Ascending aorta (tissue), 2 donors: ENCODE measurements at regions of chr6 and their contacts with region 1.

Region 1: GRCh38 chr6:71420693-71421328 is 132.2 kb downstream of the OGFRL1 start:
- DNase-seq: peak; percentile 86 to 97
- H3K4me3 ChIP-seq: peak overlapping the region; percentile 85 to 95
- H3K27ac ChIP-seq: peak overlapping the region; percentile 96 to 100
- H3K4me1 ChIP-seq: peaks cover 0 to 3% of the 10 kb centered on the region in 2 donors
- H3K27me3 ChIP-seq: no peaks in the 10 kb centered on the region
- CTCF ChIP-seq: no peak

Region 2: GRCh38 chr6:70991253-70991652 is 429.6 kb before region 1 on chr6:
- intact Hi-C with region 1: no loop called
- DNase-seq: no peak
- H3K4me3 ChIP-seq: no peak overlapping the region
- H3K27ac ChIP-seq: no peak overlapping the region
- H3K4me1 ChIP-seq: no peaks in the 10 kb centered on the region
- H3K27me3 ChIP-seq: no peaks in the 10 kb centered on the region
- CTCF ChIP-seq: no peak

Region 3: GRCh38 chr6:71288228-71289001 is 132.4 kb before region 1 on chr6 and contains the start of gene OGFRL1:
- intact Hi-C with region 1: loop called (anchors 5 kb)
- DNase-seq: peak; percentile 33 to 84
- H3K4me3 ChIP-seq: peak within 1 kb of the TSS; percentile 96 to 99
- H3K27ac ChIP-seq: peak within 1 kb of the TSS; percentile 95 to 98
- H3K4me1 ChIP-seq: peaks cover 0 to 13% of the 10 kb centered on the region in 2 donors
- H3K27me3 ChIP-seq: no peaks in the 10 kb centered on the region
- CTCF ChIP-seq: peak in 1 of 3 experiments; percentile 37
- total RNA-seq, gene OGFRL1: 14.6 TPM

Region 4: GRCh38 chr6:71383901-71384489 is 36.8 kb before region 1 on chr6:
- intact Hi-C with region 1: loop called (anchors 2 kb)
- DNase-seq: no peak
- H3K4me3 ChIP-seq: no peak overlapping the region
- H3K27ac ChIP-seq: no peak overlapping the region
- H3K4me1 ChIP-seq: peaks cover 0 to 4% of the 10 kb centered on the region in 2 donors
- H3K27me3 ChIP-seq: no peaks in the 10 kb centered on the region
- CTCF ChIP-seq: peak; percentile 47 to 78 (median 52)

Region 5: GRCh38 chr6:71404145-71404966 is 16.5 kb before region 1 on chr6:
- intact Hi-C with region 1: loop called (anchors 2 kb)
- DNase-seq: no peak
- H3K4me3 ChIP-seq: peak overlapping the region in 1 of 2 donors; percentile 2
- H3K27ac ChIP-seq: peak overlapping the region; percentile 57 to 58
- H3K4me1 ChIP-seq: peaks cover 0 to 32% of the 10 kb centered on the region in 2 donors
- H3K27me3 ChIP-seq: no peaks in the 10 kb centered on the region
- CTCF ChIP-seq: no peak

Region 6: GRCh38 chr6:71457929-71458328 is 37.1 kb after region 1 on chr6:
- intact Hi-C with region 1: no loop called
- DNase-seq: no peak
- H3K4me3 ChIP-seq: no peak overlapping the region
- H3K27ac ChIP-seq: no peak overlapping the region
- H3K4me1 ChIP-seq: no peaks in the 10 kb centered on the region
- H3K27me3 ChIP-seq: no peaks in the 10 kb centered on the region
- CTCF ChIP-seq: no peak

Region 7: GRCh38 chr6:71468841-71469750 is 48.3 kb after region 1 on chr6:
- intact Hi-C with region 1: loop called (anchors 1 kb)
- DNase-seq: peak in 1 of 2 donors; percentile 80
- H3K4me3 ChIP-seq: peak overlapping the region; percentile 7 to 46
- H3K27ac ChIP-seq: peak overlapping the region; percentile 74
- H3K4me1 ChIP-seq: peaks cover 0 to 10% of the 10 kb centered on the region in 2 donors
- H3K27me3 ChIP-seq: no peaks in the 10 kb centered on the region
- CTCF ChIP-seq: no peak

Region 8: GRCh38 chr6:71489747-71490315 is 69.0 kb after region 1 on chr6:
- intact Hi-C with region 1: loop called (anchors 5 kb)
- DNase-seq: peak in 1 of 2 donors; percentile 80
- H3K4me3 ChIP-seq: no peak overlapping the region
- H3K27ac ChIP-seq: peak overlapping the region; percentile 24 to 47
- H3K4me1 ChIP-seq: peaks cover 5 to 23% of the 10 kb centered on the region in 2 donors
- H3K27me3 ChIP-seq: no peaks in the 10 kb centered on the region
- CTCF ChIP-seq: no peak

Region 9: DNA sequence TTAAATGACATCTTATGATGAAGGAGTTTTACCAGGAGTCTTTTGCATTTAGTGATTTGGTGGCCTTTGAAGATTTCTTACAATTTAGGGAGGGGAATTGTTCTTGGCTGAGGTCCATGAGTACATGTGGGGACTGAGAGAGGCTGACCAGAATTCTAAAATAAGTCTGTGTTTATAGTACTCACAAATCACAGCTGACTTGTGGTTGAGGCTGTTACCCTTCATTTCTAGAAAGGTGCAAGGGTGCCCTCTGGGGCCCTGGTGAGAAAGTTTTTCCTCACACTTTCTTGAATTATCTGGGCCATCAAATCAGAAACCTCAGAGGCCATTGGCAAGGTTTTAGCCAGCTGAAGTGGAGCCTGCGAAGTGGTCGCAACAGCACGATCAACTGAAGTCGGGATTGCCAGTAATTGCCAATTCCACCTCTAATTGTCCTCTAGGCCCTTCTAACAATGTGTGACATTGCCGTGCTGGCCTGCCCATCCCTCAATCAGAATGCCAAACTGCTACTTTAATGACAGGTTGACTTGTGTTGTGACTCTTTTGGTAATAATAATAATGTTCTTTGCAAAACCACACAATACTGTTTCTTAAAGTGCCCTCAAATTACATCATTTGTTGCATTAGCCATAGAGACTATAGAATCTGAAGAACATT is 89.4 kb after region 1 on chr6:
- intact Hi-C with region 1: loop called (anchors 1 kb)
- DNase-seq: peak in 1 of 2 donors; percentile 79
- H3K4me3 ChIP-seq: no peak overlapping the region
- H3K27ac ChIP-seq: peak overlapping the region in 1 of 2 donors; percentile 51
- H3K4me1 ChIP-seq: peaks cover 0 to 11% of the 10 kb centered on the region in 2 donors
- H3K27me3 ChIP-seq: no peaks in the 10 kb centered on the region
- CTCF ChIP-seq: peak; percentile 64 to 82 (median 81)

Region 10: GRCh38 chr6:71621918-71622519 is 201.2 kb after region 1 on chr6:
- intact Hi-C with region 1: no loop called
- DNase-seq: no peak
- H3K4me3 ChIP-seq: no peak overlapping the region
- H3K27ac ChIP-seq: no peak overlapping the region
- H3K4me1 ChIP-seq: no peaks in the 10 kb centered on the region
- H3K27me3 ChIP-seq: no peaks in the 10 kb centered on the region
- CTCF ChIP-seq: peak in 2 of 3 experiments; percentile 40 to 54